ENCODE measurements at regions of chr19 and their contacts with region 1.

Region 1: GRCh38 chr19:45717166-45717982 is 13.3 kb downstream of the FBXO46 start:
- DNase-seq: peak; percentile 99 to 100
- H3K4me3 ChIP-seq: peak overlapping the region; percentile 59 to 61
- H3K27ac ChIP-seq: peak overlapping the region; percentile 86 to 87
- H3K4me1 ChIP-seq: peaks cover 0 to 20% (median 10%) of the 10 kb centered on the region in 4 donors
- H3K27me3 ChIP-seq: no peaks in the 10 kb centered on the region
- CTCF ChIP-seq: peak; percentile 19 to 22

Region 2: DNA sequence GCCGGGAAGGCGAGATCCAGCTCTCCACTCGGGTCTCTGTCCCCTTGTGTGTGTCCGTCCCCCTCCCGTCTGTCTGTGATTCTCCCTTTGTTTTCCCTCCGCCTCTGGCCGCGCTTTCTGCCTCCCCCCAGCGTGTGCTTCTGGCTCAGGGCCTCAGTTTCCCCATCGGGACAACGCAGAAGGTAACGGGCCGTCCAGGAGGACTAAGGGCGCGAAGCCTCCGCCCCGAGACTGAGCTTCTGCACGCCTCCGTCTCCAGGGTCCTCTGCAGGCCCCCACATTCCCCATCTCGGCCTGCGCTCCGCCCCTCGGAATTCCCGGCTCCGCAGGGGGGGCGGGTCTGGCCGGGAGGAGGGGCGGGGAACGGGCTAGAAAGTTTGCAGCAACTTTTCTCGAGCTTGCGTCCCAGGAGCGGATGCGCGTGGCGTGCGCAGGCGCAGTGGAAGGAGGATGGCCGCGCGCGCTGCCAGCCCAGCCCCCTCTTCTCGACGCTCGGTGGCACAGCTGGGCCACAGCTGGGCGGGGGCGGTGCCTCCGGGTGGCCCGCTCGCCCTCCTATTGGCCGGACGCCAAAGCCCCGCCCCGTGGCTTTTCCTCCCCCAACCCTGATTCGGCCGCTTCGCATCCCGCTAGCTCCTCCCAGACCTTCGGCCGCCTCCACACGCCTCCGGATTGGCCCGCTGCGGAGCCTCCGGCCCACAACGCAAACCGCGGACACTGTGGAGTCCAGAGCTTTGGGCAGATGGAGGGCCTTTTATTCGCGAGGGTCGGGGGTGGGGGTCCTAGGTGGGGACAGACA is 51.8 kb after region 1 on chr19 and contains the start of gene SIX5:
- intact Hi-C with region 1: loop called (anchors 10 kb)
- DNase-seq: peak; percentile 97 to 99
- H3K4me3 ChIP-seq: peak within 1 kb of the TSS; percentile 88 to 93
- H3K27ac ChIP-seq: peak within 1 kb of the TSS; percentile 98 to 99
- H3K4me1 ChIP-seq: peaks cover 0 to 45% (median 38%) of the 10 kb centered on the region in 4 donors
- H3K27me3 ChIP-seq: no peaks in the 10 kb centered on the region
- CTCF ChIP-seq: no peak